Mammary epithelial cell (primary cell): ENCODE measurements at regions of chr7 and their contacts with region 1.

Region 1: GRCh38 chr7:128347647-128348097 is 4.0 kb upstream of the RBM28 start:
- DNase-seq: no peak
- H3K4me3 ChIP-seq: no peak overlapping the region
- H3K27ac ChIP-seq: no peak overlapping the region
- H3K4me1 ChIP-seq: peaks cover 8% of the 10 kb centered on the region
- H3K27me3 ChIP-seq: peaks cover 15% of the 10 kb centered on the region
- CTCF ChIP-seq: peak; percentile 70 to 92

Region 2: GRCh38 chr7:128104035-128104742 is 243.5 kb before region 1 on chr7:
- CTCF ChIA-PET with region 1: no interaction called
- dilution Hi-C with region 1: no loop called
- in situ Hi-C with region 1: no loop called
- intact Hi-C with region 1: no loop called
- DNase-seq: no peak
- H3K4me3 ChIP-seq: peak overlapping the region in 2 of 3 experiments; percentile 6 to 39
- H3K27ac ChIP-seq: no peak overlapping the region
- H3K4me1 ChIP-seq: peaks cover 7% of the 10 kb centered on the region
- H3K27me3 ChIP-seq: peaks cover 7% of the 10 kb centered on the region
- CTCF ChIP-seq: no peak

Region 3: DNA sequence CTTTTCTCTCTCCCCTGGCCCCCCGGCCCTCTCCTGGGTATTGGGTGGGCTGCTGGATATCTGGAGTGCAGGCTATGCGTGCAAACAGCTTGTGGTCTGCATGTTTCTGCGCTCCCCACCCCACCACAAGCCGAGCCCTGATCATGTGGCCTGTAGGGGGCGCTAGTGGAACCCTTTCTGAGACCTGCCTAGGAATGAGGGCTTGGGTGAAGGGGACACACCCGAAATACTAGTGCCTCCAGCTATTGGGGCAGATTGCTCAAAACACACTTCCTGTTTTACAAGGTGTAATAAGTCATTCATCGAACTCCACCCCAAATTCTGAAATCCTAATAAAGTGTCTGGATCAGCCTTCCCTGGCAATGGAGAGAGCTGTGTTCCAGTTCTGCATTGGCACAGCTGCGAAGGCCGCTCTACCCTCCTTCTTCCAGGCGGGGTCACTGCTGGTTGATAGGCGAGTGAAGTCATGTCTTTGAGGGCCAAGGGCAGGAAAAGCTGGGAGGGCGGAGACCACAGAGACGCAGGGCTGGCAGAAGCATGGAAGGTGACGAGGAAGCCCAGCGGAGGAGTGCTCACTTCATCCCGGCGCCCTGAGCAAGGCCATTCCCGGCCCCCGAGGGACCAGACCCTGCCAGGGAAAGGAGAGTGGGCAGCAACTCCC is 33.6 kb after region 1 on chr7:
- CTCF ChIA-PET with region 1: interaction called, 17 read pairs
- dilution Hi-C with region 1: no loop called
- in situ Hi-C with region 1: loop called (anchors 5 kb)
- intact Hi-C with region 1: no loop called
- DNase-seq: peak; percentile 37
- H3K4me3 ChIP-seq: no peak overlapping the region
- H3K27ac ChIP-seq: no peak overlapping the region
- H3K4me1 ChIP-seq: peaks cover 6% of the 10 kb centered on the region
- H3K27me3 ChIP-seq: no peaks in the 10 kb centered on the region
- CTCF ChIP-seq: peak; percentile 68 to 71

Region 4: DNA sequence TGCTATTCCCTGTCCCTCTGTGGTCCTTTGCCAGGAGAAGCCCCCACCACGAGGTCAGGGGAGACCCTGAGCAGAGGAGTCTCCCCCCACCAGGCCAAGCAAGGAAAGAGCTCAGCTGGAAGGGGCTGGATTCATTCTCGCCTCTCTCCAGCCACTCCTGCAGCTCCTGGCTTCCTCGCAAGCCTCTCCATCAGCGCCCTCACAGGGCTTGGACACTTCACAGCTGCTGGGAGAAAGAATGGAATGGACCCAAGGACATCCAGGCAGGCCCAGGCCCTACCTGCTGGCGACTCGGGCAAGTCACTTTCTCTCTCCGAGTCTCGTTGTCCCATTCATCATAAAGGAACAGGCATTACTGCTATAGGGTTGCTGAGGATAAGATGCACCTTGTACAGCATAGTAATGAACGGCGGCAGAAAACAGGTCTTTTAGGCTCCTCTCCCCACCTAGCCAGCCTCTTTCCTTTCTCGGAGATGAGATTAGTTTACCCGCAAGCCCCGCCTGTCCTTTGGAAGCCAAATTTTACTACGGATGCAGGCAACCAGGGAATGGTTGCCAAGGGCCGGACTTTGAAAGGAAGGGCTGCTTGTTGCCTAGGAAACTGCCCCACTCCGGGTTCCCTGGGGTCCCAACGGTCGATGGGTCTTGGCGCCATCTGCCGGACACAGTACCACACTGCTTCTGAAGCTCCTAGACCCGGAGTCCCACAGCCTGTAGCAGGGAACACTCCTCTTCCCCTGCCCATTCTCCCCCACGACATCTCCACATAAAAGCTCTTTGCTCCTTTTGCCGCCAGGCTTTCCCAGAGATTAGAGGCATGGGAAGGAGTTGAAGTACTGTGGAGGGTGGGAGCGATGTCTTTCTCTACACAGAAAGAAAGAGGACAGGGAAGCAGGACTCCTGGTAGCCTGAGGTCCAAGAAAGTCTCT is 39.8 kb after region 1 on chr7:
- CTCF ChIA-PET with region 1: interaction called, 17 read pairs
- dilution Hi-C with region 1: no loop called
- in situ Hi-C with region 1: loop called (anchors 5 kb)
- intact Hi-C with region 1: loop called (anchors 1 kb)
- DNase-seq: peak; percentile 39
- H3K4me3 ChIP-seq: no peak overlapping the region
- H3K27ac ChIP-seq: no peak overlapping the region
- H3K4me1 ChIP-seq: no peaks in the 10 kb centered on the region
- H3K27me3 ChIP-seq: no peaks in the 10 kb centered on the region
- CTCF ChIP-seq: peak; percentile 75 to 89

Region 5: DNA sequence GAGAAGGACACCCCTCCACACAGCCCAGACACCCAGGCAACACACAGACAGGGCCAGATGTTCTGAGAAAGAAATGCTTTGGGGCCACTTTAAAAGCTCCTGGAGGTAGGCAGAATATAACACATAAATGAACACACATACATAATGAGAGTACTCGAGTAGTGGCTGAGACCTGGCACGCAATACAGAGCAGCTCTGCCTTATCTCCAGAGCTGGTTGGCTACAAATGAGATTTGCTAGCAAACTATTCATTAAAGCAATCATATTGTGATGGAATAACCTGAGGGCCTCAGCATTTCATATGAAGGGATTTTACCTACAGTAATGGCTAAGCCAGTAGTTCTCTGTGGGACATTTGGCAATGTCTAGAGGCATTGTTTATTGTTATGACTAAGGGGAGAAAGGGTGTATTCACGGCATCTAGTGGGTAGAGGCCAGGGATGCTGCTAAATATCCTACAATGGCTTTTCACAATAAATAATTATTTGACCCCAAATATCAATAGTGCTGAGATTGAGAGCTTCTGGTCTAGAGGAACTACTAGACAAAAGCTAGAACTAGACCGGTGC is 67.6 kb after region 1 on chr7:
- CTCF ChIA-PET with region 1: no interaction called
- dilution Hi-C with region 1: no loop called
- in situ Hi-C with region 1: no loop called
- intact Hi-C with region 1: no loop called
- DNase-seq: no peak
- H3K4me3 ChIP-seq: no peak overlapping the region
- H3K27ac ChIP-seq: no peak overlapping the region
- H3K4me1 ChIP-seq: peaks cover 8% of the 10 kb centered on the region
- H3K27me3 ChIP-seq: no peaks in the 10 kb centered on the region
- CTCF ChIP-seq: no peak

Region 6: GRCh38 chr7:128425850-128426249 is 78.2 kb after region 1 on chr7:
- CTCF ChIA-PET with region 1: no interaction called
- dilution Hi-C with region 1: no loop called
- in situ Hi-C with region 1: no loop called
- intact Hi-C with region 1: loop called (anchors 1 kb)
- DNase-seq: peak; percentile 32
- H3K4me3 ChIP-seq: no peak overlapping the region
- H3K27ac ChIP-seq: no peak overlapping the region
- H3K4me1 ChIP-seq: peaks cover 3% of the 10 kb centered on the region
- H3K27me3 ChIP-seq: no peaks in the 10 kb centered on the region
- CTCF ChIP-seq: peak; percentile 92 to 98

Region 7: GRCh38 chr7:128443831-128444600 is 96.3 kb after region 1 on chr7:
- CTCF ChIA-PET with region 1: no interaction called
- dilution Hi-C with region 1: no loop called
- in situ Hi-C with region 1: no loop called
- intact Hi-C with region 1: no loop called
- DNase-seq: peak; percentile 19
- H3K4me3 ChIP-seq: no peak overlapping the region
- H3K27ac ChIP-seq: no peak overlapping the region
- H3K4me1 ChIP-seq: no peaks in the 10 kb centered on the region
- H3K27me3 ChIP-seq: no peaks in the 10 kb centered on the region
- CTCF ChIP-seq: no peak

Region 8: GRCh38 chr7:128459394-128459878 is 111.8 kb after region 1 on chr7:
- CTCF ChIA-PET with region 1: interaction called, 5 read pairs
- dilution Hi-C with region 1: no loop called
- in situ Hi-C with region 1: no loop called
- intact Hi-C with region 1: loop called (anchors 1 kb)
- DNase-seq: peak; percentile 52
- H3K4me3 ChIP-seq: no peak overlapping the region
- H3K27ac ChIP-seq: no peak overlapping the region
- H3K4me1 ChIP-seq: peaks cover 20% of the 10 kb centered on the region
- H3K27me3 ChIP-seq: no peaks in the 10 kb centered on the region
- CTCF ChIP-seq: peak; percentile 61 to 76

Region 9: GRCh38 chr7:128986609-128987008 is 638.9 kb after region 1 on chr7:
- CTCF ChIA-PET with region 1: no interaction called
- dilution Hi-C with region 1: no loop called
- in situ Hi-C with region 1: no loop called
- intact Hi-C with region 1: no loop called
- DNase-seq: no peak
- H3K4me3 ChIP-seq: no peak overlapping the region
- H3K27ac ChIP-seq: no peak overlapping the region
- H3K4me1 ChIP-seq: no peaks in the 10 kb centered on the region
- H3K27me3 ChIP-seq: no peaks in the 10 kb centered on the region
- CTCF ChIP-seq: no peak